Transverse colon (tissue), 4 donors: ENCODE measurements at regions of chr17 and their contacts with region 1.

Region 1: GRCh38 chr17:39810939-39811728 is 53.0 kb downstream of the IKZF3 start:
- DNase-seq: no peak
- H3K4me3 ChIP-seq: no peak overlapping the region
- H3K27ac ChIP-seq: no peak overlapping the region
- H3K4me1 ChIP-seq: no peaks in the 10 kb centered on the region
- H3K27me3 ChIP-seq: peaks cover 36% of the 10 kb centered on the region
- CTCF ChIP-seq: no peak
- EP300 ChIP-seq: no peak
- POLR2A ChIP-seq: no peak

Region 2: DNA sequence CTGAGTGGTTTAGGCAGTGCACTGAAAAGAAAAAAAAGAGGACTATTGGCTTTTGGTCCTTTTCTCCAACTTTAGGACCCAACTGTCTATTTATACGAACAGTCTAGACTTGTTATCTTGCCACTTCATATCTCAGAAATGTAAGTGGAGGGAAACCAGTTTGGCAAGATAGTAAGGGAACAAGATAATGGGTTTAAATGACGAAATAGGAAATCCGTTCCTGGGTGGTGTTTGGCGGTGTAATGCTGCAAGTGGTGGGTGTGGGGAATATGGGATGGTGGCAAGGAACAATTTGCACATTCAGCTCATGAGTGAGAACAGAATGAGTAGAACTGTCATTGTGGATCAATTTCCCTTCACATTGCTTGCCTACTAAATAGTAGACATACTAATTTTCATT is 28.6 kb before region 1 on chr17:
- in situ Hi-C with region 1: no loop called
- intact Hi-C with region 1: loop called (anchors 1 kb)
- DNase-seq: no peak
- H3K4me3 ChIP-seq: no peak overlapping the region
- H3K27ac ChIP-seq: no peak overlapping the region
- H3K4me1 ChIP-seq: no peaks in the 10 kb centered on the region
- H3K27me3 ChIP-seq: peaks cover 4% of the 10 kb centered on the region
- CTCF ChIP-seq: no peak
- EP300 ChIP-seq: no peak
- POLR2A ChIP-seq: no peak